ENCODE measurements at regions of chr4 and their contacts with region 1.

Region 1: GRCh38 chr4:165327211-165328100 is at the start of gene MSMO1:
- DNase-seq: peak; percentile 100
- H3K4me3 ChIP-seq: peak within 1 kb of the TSS; percentile 84 to 98 (median 92)
- H3K27ac ChIP-seq: peak within 1 kb of the TSS; percentile 98
- H3K4me1 ChIP-seq: peaks cover 38% of the 10 kb centered on the region
- H3K27me3 ChIP-seq: no peaks in the 10 kb centered on the region
- CTCF ChIP-seq: no peak
- total RNA-seq, gene MSMO1: 284 to 459 TPM

Region 2: DNA sequence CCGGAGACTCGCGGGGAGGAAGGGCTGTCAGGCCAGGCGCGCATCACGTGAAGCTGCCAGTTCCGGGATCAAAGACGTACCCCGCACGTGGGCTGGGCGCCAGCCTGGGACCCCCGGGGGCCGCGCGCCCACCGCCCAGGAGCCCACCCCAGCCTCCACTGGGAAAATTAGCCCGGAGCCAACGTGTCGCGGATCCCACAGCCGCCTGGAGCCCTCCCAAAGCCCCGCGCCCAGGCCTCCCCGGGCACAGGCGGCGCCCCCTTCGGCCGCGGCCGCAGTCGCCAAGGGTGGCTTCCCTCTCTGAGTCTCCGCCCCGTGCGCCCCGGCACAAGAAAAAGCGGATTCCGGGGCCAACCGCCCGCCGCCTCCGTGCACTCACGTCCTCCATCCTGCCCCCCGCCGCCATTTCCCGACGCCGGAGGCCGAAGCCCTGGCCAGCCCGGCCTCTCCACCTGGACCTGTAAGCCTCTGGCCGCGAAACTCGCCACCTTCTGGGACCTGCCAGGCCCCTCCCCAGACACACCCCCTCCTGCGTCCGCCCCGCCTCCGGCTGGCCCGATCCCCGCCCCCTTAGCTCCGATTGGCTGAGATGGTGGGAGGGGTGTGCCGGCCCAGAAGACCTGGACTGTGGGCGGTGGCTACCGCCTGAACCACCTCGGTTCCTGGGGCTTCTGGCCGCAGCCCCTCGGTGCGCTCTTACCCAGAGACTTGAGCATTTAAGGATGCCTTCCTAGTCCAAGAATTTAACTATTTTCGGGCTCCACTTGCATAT is 214.9 kb before region 1 on chr4 and contains the start of gene TMEM192:
- CTCF ChIA-PET with region 1: no interaction called
- dilution Hi-C with region 1: no loop called
- in situ Hi-C with region 1: no loop called
- intact Hi-C with region 1: loop called (anchors 5 kb)
- DNase-seq: peak; percentile 93
- H3K4me3 ChIP-seq: peak within 1 kb of the TSS; percentile 74 to 99 (median 83)
- H3K27ac ChIP-seq: peak within 1 kb of the TSS; percentile 86
- H3K4me1 ChIP-seq: peaks cover 8% of the 10 kb centered on the region
- H3K27me3 ChIP-seq: no peaks in the 10 kb centered on the region
- CTCF ChIP-seq: peak in 1 of 2 donors; percentile 44
- total RNA-seq, gene TMEM192: 21.3 to 25.5 TPM

Region 3: GRCh38 chr4:165131247-165131832 is 196.1 kb before region 1 on chr4:
- CTCF ChIA-PET with region 1: interaction called, 3 read pairs
- dilution Hi-C with region 1: no loop called
- in situ Hi-C with region 1: loop called in 1 of 2 experiments (anchors 10 kb)
- intact Hi-C with region 1: loop called (anchors 1 kb)
- DNase-seq: peak; percentile 45
- H3K4me3 ChIP-seq: no peak overlapping the region
- H3K27ac ChIP-seq: no peak overlapping the region
- H3K4me1 ChIP-seq: no peaks in the 10 kb centered on the region
- H3K27me3 ChIP-seq: no peaks in the 10 kb centered on the region
- CTCF ChIP-seq: peak; percentile 92 to 94

Region 4: DNA sequence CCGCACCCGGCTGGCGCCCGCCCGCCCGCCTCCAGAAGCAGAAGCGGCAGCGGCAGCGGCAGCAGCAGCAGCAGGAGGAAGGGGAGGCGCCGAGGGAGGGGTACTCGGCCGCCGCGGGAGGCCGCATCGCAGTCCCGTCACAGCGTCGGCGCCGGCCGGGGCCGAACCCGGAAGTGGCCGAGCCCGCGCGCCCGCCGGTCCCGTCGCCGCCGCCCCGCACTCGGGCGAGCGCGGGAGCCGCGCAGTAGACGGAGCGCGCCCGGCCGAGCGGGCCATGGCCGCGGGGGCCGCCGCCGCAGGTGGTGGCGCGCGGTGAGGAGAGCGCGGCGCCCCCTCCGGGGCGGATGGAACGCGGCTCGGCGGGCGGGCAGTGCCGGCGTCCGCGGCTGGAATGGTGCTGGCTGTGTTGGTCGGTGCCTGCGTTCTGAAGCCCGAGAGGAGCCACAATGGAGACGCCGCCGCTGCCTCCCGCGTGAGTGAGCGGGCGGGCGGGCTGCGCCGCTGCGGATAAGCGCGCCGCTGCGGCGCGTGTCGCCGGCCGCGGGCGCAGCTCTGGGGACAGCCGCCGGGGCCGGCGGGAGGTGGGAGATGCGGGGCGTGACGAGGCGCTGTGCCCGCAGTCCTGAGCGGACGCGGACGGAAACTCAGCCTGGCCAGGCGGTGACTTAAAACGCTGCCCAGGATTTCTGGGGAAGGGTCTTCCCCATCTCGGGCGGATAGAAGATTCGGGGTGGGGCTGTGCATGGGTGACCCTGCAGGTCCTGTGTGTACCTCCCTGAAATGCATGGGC is 119.8 kb before region 1 on chr4 and contains the start of gene KLHL2:
- CTCF ChIA-PET with region 1: no interaction called
- dilution Hi-C with region 1: no loop called
- in situ Hi-C with region 1: loop called in 1 of 2 experiments (anchors 10 kb)
- intact Hi-C with region 1: loop called (anchors 1 kb)
- DNase-seq: peak; percentile 59
- H3K4me3 ChIP-seq: peak within 1 kb of the TSS; percentile 82 to 91 (median 89)
- H3K27ac ChIP-seq: peak within 1 kb of the TSS; percentile 59
- H3K4me1 ChIP-seq: peaks cover 53% of the 10 kb centered on the region
- H3K27me3 ChIP-seq: no peaks in the 10 kb centered on the region
- CTCF ChIP-seq: no peak
- total RNA-seq, gene KLHL2: 23.7 to 24.2 TPM

Region 5: GRCh38 chr4:165222651-165222994 is 104.8 kb before region 1 on chr4:
- CTCF ChIA-PET with region 1: no interaction called
- dilution Hi-C with region 1: no loop called
- in situ Hi-C with region 1: no loop called
- intact Hi-C with region 1: loop called (anchors 2 kb)
- DNase-seq: peak; percentile 54
- H3K4me3 ChIP-seq: no peak overlapping the region
- H3K27ac ChIP-seq: peak overlapping the region; percentile 70
- H3K4me1 ChIP-seq: peaks cover 26% of the 10 kb centered on the region
- H3K27me3 ChIP-seq: no peaks in the 10 kb centered on the region
- CTCF ChIP-seq: no peak

Region 6: GRCh38 chr4:165288639-165289422 is 38.6 kb before region 1 on chr4:
- CTCF ChIA-PET with region 1: no interaction called
- dilution Hi-C with region 1: no loop called
- in situ Hi-C with region 1: no loop called
- intact Hi-C with region 1: loop called (anchors 1 kb)
- DNase-seq: peak; percentile 69
- H3K4me3 ChIP-seq: no peak overlapping the region
- H3K27ac ChIP-seq: no peak overlapping the region
- H3K4me1 ChIP-seq: peaks cover 10% of the 10 kb centered on the region
- H3K27me3 ChIP-seq: no peaks in the 10 kb centered on the region
- CTCF ChIP-seq: no peak

Region 7: DNA sequence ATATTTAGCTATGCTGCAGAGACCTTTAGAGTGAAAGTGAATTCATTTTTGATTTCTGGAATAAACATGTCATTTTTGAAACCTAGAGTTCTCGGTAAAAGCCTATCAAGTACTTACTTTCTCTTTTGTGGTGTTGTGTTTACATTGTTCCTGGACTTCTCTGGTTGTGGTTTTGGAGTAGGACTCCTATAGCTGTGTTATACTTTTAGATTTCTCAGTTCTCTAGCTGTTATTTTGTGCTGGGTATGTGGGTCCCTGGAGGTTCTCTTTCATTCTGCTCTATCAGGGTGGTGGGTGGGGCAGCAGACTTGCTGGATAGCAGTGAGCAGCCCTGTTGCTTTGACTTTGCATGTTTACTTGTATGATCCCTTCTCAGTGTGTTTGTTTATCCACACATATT is 25.6 kb before region 1 on chr4:
- CTCF ChIA-PET with region 1: no interaction called
- dilution Hi-C with region 1: no loop called
- in situ Hi-C with region 1: no loop called
- intact Hi-C with region 1: no loop called
- DNase-seq: no peak
- H3K4me3 ChIP-seq: no peak overlapping the region
- H3K27ac ChIP-seq: no peak overlapping the region
- H3K4me1 ChIP-seq: no peaks in the 10 kb centered on the region
- H3K27me3 ChIP-seq: no peaks in the 10 kb centered on the region
- CTCF ChIP-seq: no peak

Region 8: DNA sequence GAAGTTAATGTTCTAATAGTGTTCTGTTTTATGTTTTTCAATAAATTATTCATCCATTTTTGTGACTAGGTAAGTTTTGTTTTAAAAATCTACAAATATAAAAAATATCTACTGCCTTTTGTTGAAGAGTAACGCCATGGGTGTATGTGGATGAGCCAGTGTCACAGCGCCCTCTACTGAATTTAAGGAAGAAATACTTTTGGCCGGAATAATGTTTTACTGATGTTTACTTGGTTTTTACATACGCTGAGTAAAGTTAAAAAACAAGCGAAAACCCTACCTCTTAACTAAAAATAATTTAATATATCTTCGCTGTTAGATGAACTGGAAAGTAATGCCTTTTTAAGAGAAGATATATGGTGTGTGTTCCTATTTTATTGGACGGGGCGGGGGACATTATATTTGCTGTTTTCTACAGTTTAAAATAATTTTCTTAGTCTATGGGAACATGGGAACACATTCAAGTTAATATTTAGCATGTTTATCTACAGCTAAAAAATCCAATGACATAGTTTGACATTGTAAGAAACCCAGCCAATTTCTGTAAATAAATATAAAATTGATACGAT is 137.4 kb after region 1 on chr4:
- CTCF ChIA-PET with region 1: no interaction called
- dilution Hi-C with region 1: no loop called
- in situ Hi-C with region 1: loop called in 1 of 2 experiments (anchors 25 kb)
- intact Hi-C with region 1: no loop called
- DNase-seq: no peak
- H3K4me3 ChIP-seq: peak overlapping the region in 1 of 3 experiments; percentile 21
- H3K27ac ChIP-seq: no peak overlapping the region
- H3K4me1 ChIP-seq: peaks cover 8% of the 10 kb centered on the region
- H3K27me3 ChIP-seq: no peaks in the 10 kb centered on the region
- CTCF ChIP-seq: peak; percentile 71 to 76

Measured in mammary epithelial cell (primary cell).